Breast epithelium (tissue), 4 donors: ENCODE measurements at regions of chr17 and their contacts with region 1.

Region 1: GRCh38 chr17:12089809-12090384 is 69.2 kb downstream of the MAP2K4 start:
- DNase-seq: no peak
- H3K4me3 ChIP-seq: no peak overlapping the region
- H3K27ac ChIP-seq: no peak overlapping the region
- H3K4me1 ChIP-seq: no peaks in the 10 kb centered on the region
- H3K27me3 ChIP-seq: no peaks in the 10 kb centered on the region
- CTCF ChIP-seq: no peak
- POLR2A ChIP-seq: no peak

Region 2: DNA sequence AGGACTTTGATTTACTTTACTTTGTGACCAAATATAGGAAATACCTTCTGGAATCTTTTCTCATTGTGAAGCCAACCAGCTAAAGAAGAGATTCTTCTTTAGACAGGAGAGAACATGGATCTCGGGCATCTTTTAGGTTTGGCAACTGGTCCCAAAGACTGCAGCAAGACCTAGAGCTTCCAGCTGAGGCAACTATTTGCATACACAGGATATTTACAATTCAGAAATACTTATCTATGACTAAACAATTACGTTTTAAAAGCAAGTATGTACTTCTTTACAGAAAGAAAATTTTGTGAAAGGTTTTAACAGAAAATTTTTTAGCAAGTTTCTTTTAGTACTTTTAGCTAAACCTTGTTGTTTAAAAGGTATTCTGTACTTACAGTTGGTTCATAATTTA is 37.3 kb after region 1 on chr17:
- intact Hi-C with region 1: no loop called
- DNase-seq: no peak
- H3K4me3 ChIP-seq: no peak overlapping the region
- H3K27ac ChIP-seq: no peak overlapping the region
- H3K4me1 ChIP-seq: no peaks in the 10 kb centered on the region
- H3K27me3 ChIP-seq: no peaks in the 10 kb centered on the region
- CTCF ChIP-seq: no peak
- POLR2A ChIP-seq: no peak

Region 3: DNA sequence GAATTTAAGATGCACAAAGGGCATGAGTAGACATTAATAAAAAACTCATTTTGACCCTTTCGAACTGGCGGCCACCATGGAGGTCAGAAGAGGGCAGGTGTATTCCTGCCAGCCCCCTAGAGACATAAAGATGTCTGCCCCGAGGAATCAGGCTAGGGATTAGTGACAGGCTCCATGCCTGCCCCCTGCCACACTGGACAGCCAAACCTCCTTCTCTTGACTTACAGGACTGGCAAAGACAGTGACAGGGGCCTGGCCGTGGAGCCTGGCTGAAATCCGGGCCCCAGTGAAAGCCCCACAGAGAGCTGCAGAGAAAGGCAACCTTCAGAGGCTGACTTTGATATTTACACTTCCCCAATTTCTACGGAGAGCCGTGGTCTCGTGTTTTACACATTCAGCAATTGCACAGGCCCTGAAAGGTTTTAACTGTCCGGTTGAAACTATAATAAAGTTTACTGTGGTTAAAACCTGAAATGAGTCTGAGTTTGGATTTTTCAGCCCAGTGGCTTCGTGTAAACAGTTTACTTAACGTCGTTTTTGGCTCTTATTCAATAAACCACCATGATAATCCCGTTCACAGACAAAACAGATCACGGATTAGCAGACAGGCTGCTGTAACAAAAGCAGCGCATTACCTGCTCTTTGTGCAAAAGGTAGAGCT is 331.9 kb after region 1 on chr17:
- intact Hi-C with region 1: loop called (anchors 5 kb)
- DNase-seq: no peak
- H3K4me3 ChIP-seq: no peak overlapping the region
- H3K27ac ChIP-seq: no peak overlapping the region
- H3K4me1 ChIP-seq: no peaks in the 10 kb centered on the region
- H3K27me3 ChIP-seq: no peaks in the 10 kb centered on the region
- CTCF ChIP-seq: no peak
- POLR2A ChIP-seq: no peak